Caco-2 (cell line): ENCODE measurements at regions of chr10 and their contacts with region 1.

Region 1: GRCh38 chr10:122258136-122259074 is 12.7 kb upstream of the BTBD16 start:
- DNase-seq: no peak
- H3K4me3 ChIP-seq: no peak overlapping the region
- H3K4me3 Mint-ChIP-seq: no peak overlapping the region
- H3K27ac Mint-ChIP-seq: no peak overlapping the region
- H3K4me1 ChIP-seq: peaks cover under 1% of the 10 kb centered on the region; the same call in 1 of the 2 replicates
- H3K4me1 Mint-ChIP-seq: peaks cover 5% of the 10 kb centered on the region
- H3K27me3 ChIP-seq: no peaks in the 10 kb centered on the region
- H3K27me3 Mint-ChIP-seq: no peaks in the 10 kb centered on the region
- CTCF ChIP-seq: no peak

Region 2: GRCh38 chr10:122056431-122057094 is 201.8 kb before region 1 on chr10:
- CTCF ChIA-PET with region 1: no interaction called
- POLR2A ChIA-PET with region 1: interaction called, 11 read pairs
- intact Hi-C with region 1: no loop called
- DNase-seq: peak in 1 of 2 experiments; percentile 47
- H3K4me3 ChIP-seq: no peak overlapping the region
- H3K4me3 Mint-ChIP-seq: no peak overlapping the region
- H3K27ac Mint-ChIP-seq: peak overlapping the region; percentile 74
- H3K4me1 ChIP-seq: peaks cover 12% of the 10 kb centered on the region; the same call in 1 of the 2 replicates
- H3K4me1 Mint-ChIP-seq: peaks cover 26% of the 10 kb centered on the region
- H3K27me3 ChIP-seq: no peaks in the 10 kb centered on the region
- H3K27me3 Mint-ChIP-seq: no peaks in the 10 kb centered on the region
- CTCF ChIP-seq: no peak